Activated T-helper 1 cell treated with anti-CD3 and anti-CD28 coated beads, Interleukin-12 subunit alpha, Interleukin-12 subunit beta, Interleukin-2, Interleukin-4 antibody, amounts not matched to agents 30 ng/mL and 10 ng/mL and 1 ng/mL, durations not matched to agents 14 hours and 24 hours and 36 hours (primary cell): ENCODE measurements at regions of chr12 and their contacts with region 1.

Region 1: DNA sequence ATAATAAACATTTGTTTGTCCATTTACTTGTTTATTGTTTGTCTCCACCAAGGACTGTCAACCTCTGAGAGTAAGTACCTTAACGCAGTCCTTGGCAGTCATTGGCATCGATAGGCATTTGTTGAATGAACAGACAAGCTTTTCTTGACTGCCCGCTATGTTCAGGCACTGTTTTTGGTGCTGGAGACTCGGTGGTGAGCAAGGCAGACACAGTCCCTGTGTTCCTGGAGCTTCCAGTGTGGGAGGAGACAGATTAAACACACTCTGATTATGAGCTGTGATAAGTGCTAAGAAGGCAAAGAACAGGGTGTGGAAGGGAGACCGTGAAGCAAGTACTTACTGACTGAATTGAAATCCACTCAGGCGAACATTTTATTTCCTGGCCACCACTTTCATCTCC is 1.2 kb downstream of the ATP6V0A2 start:
- DNase-seq: peak; percentile 8
- H3K4me3 Mint-ChIP-seq: peak overlapping the region; percentile 91
- H3K27ac Mint-ChIP-seq: peak overlapping the region; percentile 85
- H3K4me1 Mint-ChIP-seq: peaks cover 41% of the 10 kb centered on the region
- H3K27me3 Mint-ChIP-seq: no peaks in the 10 kb centered on the region

Region 2: DNA sequence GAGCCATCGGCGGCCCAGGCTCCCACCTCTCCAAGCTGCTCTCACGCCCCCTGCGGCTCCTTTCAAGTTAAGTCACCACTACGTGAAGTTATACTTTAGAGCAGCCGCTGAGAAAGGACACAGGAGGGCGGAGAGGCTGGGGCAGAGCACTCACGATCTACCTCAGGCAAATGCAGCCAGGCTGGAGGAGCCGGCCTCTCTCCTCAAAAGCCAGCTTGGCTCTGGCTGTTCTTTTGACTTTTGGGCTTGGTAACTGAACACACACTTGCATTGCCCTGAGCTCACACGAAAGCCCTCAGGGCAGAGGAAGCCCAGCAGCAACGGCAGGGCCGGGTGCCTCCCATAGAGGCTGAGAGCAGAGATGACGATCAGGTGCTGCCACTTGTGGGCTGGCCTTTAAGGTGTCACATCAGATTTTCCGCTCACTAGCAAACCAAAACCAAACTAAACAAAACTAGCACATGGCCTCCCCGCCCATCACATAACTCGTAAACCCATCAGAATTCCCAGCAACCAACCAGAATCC is 637.7 kb before region 1 on chr12:
- intact Hi-C with region 1: loop called (anchors 2 kb)
- DNase-seq: peak; percentile 81
- H3K4me3 Mint-ChIP-seq: peak overlapping the region; percentile 86
- H3K27ac Mint-ChIP-seq: peak overlapping the region; percentile 99
- H3K4me1 Mint-ChIP-seq: peaks cover 57% of the 10 kb centered on the region
- H3K27me3 Mint-ChIP-seq: peaks cover 2% of the 10 kb centered on the region

Region 3: GRCh38 chr12:123436017-123436964 is 277.1 kb before region 1 on chr12 and contains the start of gene RILPL2:
- intact Hi-C with region 1: loop called (anchors 5 kb)
- DNase-seq: peak; percentile 91
- H3K4me3 Mint-ChIP-seq: peak within 1 kb of the TSS; percentile 99
- H3K27ac Mint-ChIP-seq: peak within 1 kb of the TSS; percentile 99
- H3K4me1 Mint-ChIP-seq: peaks cover 39% of the 10 kb centered on the region
- H3K27me3 Mint-ChIP-seq: no peaks in the 10 kb centered on the region
- total RNA-seq, gene RILPL2: 20.1 and 20.6 TPM in 2 replicates

Region 4: DNA sequence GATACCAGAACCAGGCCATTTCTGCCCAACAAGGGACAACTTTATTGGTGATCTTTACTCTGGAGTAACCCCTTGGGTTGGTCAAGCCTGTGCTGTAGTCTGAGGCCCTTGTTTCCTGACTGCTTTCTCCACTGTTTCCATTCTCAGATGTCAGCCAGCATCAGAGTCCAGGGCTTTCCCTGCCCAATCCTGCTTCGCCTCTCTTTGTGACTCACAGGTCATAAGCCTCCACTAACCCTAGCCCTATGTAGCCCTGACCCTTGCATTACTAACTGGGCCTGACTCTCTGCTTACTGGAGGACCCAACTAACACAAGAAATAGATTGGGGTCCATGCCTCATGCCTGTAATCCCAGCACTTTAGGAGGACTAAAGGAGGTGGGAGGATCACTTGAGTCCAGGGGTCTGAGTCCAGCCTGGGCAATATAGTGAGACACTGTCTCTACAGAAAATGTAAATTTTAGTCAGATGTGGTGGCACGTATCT is 264.1 kb before region 1 on chr12:
- intact Hi-C with region 1: no loop called
- DNase-seq: no peak
- H3K4me3 Mint-ChIP-seq: peak overlapping the region; percentile 7
- H3K27ac Mint-ChIP-seq: peak overlapping the region; percentile 77
- H3K4me1 Mint-ChIP-seq: peaks cover 20% of the 10 kb centered on the region
- H3K27me3 Mint-ChIP-seq: no peaks in the 10 kb centered on the region

Region 5: GRCh38 chr12:123670882-123671728 is 42.3 kb before region 1 on chr12 and contains the start of gene TCTN2:
- intact Hi-C with region 1: loop called (anchors 1 kb)
- DNase-seq: peak; percentile 92
- H3K4me3 Mint-ChIP-seq: peak within 1 kb of the TSS; percentile 88
- H3K27ac Mint-ChIP-seq: peak within 1 kb of the TSS; percentile 18
- H3K4me1 Mint-ChIP-seq: peaks cover 15% of the 10 kb centered on the region
- H3K27me3 Mint-ChIP-seq: no peaks in the 10 kb centered on the region
- total RNA-seq, gene TCTN2: 2.8 and 3.0 TPM in 2 replicates

Region 6: DNA sequence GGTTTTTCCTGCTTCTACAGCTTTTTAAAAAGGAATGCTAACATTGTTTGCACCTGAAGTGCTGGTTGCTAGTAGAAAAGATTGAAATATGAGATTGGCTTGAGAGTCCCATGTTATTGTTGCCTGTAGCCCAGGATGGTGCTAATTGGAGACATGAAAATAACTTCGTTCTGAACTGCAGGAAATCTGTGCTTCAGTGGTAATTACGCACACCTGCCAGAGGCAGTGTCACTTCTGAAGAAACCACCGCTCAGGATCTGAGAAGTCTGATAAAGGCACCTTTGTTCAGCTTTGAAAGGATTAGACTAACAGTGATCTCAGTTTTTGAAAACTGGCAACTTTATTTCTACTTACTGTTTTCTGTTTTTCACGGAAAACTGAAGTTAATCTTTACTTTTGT is 16.8 kb before region 1 on chr12:
- intact Hi-C with region 1: no loop called
- DNase-seq: no peak
- H3K4me3 Mint-ChIP-seq: no peak overlapping the region
- H3K27ac Mint-ChIP-seq: no peak overlapping the region
- H3K4me1 Mint-ChIP-seq: no peaks in the 10 kb centered on the region
- H3K27me3 Mint-ChIP-seq: no peaks in the 10 kb centered on the region

Region 7: DNA sequence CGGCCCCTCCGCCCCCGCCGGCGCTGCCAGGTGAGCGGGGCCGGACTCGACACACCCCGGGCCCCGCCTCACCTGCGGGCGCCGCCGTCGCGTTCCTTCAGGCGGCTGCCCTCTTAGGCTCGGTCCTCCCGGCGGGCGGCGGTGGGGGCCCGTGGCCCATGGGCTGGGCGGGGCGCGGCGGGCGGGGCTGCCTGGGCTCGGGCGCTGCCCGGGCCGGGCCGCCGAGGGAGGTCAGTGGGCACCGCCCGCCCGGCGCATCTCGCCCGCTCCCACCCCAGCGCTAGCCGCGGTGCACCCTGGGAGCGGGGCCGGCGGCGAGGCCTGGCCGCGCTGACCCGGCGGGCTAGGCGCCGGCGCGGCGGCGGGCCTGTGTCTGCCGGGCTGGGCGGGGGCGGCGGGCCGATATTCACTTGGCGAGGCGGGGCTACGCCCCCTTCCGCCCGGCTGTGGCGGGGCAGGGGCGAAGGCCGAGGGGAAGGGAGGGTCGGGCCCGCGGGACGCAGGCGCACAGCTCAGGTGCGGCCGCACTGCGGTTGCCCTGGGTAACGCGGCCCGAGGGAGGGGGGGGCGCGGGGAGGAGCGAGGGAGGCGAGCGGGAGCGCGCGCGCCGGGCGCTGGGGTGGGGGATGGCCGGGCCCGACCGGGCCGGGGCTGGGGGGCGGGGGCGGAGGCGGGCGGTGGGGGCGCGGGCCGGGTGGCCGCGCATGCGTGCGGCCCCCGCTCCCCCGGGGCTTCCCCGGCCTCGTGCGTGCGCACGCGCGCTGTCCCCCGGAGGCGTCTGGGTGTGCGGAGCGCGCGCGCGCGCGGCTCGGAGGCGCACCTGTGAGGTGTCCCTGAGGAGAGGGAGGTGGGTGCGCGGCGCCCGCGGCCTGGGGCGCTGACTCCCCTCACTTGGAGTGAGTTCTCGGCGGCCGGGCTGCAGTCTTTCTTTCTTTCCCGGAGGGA is 259.3 kb after region 1 on chr12 and contains the starts of genes CCDC92 and ZNF664:
- intact Hi-C with region 1: loop called (anchors 1 kb)
- DNase-seq: peak; percentile 91
- H3K4me3 Mint-ChIP-seq: peak within 1 kb of the TSS; percentile 91
- H3K27ac Mint-ChIP-seq: peak within 1 kb of the TSS; percentile 78
- H3K4me1 Mint-ChIP-seq: peaks cover 53% of the 10 kb centered on the region
- H3K27me3 Mint-ChIP-seq: peaks cover 15% of the 10 kb centered on the region
- total RNA-seq, gene CCDC92: 7.7 and 8.3 TPM in 2 replicates
- total RNA-seq, gene ZNF664: 66.9 and 68.1 TPM in 2 replicates